ENCODE measurements at regions of chr17 and their contacts with region 1.

Region 1: GRCh38 chr17:13067629-13068303 is 49.9 kb upstream of the ELAC2 start:
- DNase-seq: no peak
- ATAC-seq: peak in 2 of 4 donors; percentile 10 to 50
- H3K4me3 ChIP-seq: no peak overlapping the region
- H3K27ac ChIP-seq: no peak overlapping the region
- H3K4me1 ChIP-seq: peaks cover 0 to 3% (median 0%) of the 10 kb centered on the region in 12 donors
- H3K27me3 ChIP-seq: no peaks in the 10 kb centered on the region
- CTCF ChIP-seq: no peak
- POLR2A ChIP-seq: no peak

Region 2: GRCh38 chr17:13024526-13025257 is 43.1 kb before region 1 on chr17:
- intact Hi-C with region 1: no loop called
- DNase-seq: peak in 4 of 5 donors; percentile 38 to 79 (median 58)
- ATAC-seq: peak; percentile 69 to 88 (median 83)
- H3K4me3 ChIP-seq: peak overlapping the region in 6 of 12 donors; percentile 3 to 43 (median 27)
- H3K27ac ChIP-seq: no peak overlapping the region
- H3K4me1 ChIP-seq: peaks cover 0 to 9% (median 0%) of the 10 kb centered on the region in 12 donors
- H3K27me3 ChIP-seq: peaks cover 0 to 10% (median 0%) of the 10 kb centered on the region in 9 donors
- CTCF ChIP-seq: peak; percentile 88 to 99 (median 92)
- POLR2A ChIP-seq: no peak

Region 3: DNA sequence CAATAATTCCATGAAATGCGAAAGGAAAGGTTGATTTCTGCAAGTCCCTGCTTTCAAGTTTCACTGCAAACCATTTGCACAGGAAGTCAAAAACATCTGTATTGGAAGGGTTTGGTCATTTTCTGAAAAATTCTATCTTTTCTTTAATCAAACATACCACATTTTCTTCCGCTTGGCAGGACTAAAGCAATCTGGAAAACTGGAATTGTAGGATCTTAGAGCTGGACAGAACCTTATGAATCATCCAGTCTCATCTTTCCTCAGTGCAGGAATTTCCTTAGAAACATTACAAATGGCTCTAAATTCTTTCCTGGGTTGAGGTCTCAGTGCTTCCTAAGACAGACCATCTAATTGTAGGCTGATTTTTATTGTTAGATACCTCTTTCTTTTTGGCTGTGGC is 61.6 kb after region 1 on chr17:
- intact Hi-C with region 1: loop called in 1 of 10 experiments (anchors 10 kb)
- DNase-seq: no peak
- ATAC-seq: no peak
- H3K4me3 ChIP-seq: no peak overlapping the region
- H3K27ac ChIP-seq: no peak overlapping the region
- H3K4me1 ChIP-seq: no peaks in the 10 kb centered on the region
- H3K27me3 ChIP-seq: peaks cover 0 to 3% (median 0%) of the 10 kb centered on the region in 9 donors
- CTCF ChIP-seq: no peak
- POLR2A ChIP-seq: no peak